Prostate gland (tissue), 2 donors: ENCODE measurements at regions of chr1 and their contacts with region 1.

Region 1: DNA sequence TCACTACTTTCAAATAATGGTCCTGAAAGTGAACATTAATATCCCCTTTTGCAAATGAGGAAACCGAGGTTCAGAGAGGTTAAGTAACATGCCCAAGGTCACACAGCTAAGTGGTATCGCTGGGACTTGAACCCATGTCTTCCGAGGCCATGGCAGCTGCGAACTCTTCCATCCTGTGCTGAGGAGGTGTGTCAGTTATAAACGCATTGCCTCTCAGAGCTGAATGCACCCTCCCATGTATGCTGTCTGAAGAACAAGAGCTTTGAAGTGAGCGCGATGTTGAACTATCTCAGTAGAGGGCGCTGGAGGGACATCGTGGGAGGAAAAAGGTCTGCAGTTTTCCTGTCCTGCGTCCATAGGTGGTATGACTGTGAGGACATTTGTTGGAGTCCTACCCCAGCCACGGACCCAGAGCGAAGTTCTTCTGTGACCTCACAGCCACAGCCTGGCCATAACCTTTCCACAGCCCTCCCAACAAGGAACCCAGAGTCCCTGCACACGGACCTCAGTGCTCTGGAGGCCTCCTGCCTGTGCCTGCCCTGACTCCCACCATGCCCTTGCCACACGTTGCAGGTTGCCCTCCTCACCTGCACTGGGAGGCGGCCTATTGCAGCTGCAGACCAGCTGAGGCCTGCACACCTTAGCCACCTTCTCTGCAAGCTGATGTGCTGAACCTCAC is 7.5 kb downstream of the MYOC start:
- DNase-seq: peak; percentile 84
- H3K4me3 ChIP-seq: no peak overlapping the region
- H3K27ac ChIP-seq: peak overlapping the region; percentile 78 to 80
- H3K4me1 ChIP-seq: peaks cover 13% of the 10 kb centered on the region
- H3K27me3 ChIP-seq: no peaks in the 10 kb centered on the region
- CTCF ChIP-seq: peak; percentile 53 to 85 (median 76)
- POLR2A ChIP-seq: no peak

Region 2: GRCh38 chr1:171758011-171758410 is 113.1 kb after region 1 on chr1:
- intact Hi-C with region 1: no loop called
- DNase-seq: no peak
- H3K4me3 ChIP-seq: no peak overlapping the region
- H3K27ac ChIP-seq: no peak overlapping the region
- H3K4me1 ChIP-seq: no peaks in the 10 kb centered on the region
- H3K27me3 ChIP-seq: no peaks in the 10 kb centered on the region
- CTCF ChIP-seq: no peak
- POLR2A ChIP-seq: no peak

Region 3: DNA sequence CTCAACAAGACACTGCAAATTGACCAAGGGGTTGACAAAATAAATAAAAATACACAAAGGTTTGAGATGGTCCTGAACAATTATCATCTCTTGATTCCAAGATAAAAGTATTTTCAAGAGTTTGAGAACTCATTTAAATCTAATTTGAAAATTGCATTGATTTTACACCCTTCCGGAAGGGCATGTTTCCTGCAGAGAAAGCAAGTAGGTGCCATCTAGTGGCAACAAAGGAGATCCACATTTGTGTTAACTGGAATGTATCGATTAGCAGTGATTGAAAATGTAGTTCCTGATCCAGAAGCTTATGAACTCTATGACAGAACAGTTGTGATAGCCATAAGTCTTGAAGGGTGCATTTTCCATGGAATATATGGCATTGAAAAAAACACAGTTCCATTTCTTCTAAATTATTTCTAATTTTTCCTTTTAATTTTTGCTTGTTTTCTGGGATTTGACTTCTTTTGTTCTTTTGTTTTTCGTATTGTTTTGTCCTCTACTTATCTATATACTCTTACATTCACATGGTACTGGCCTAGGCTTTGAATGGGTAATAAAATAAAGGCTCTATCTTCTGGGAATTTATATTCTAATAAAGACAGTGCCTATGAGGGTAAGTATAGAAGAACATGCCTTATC is 340.0 kb after region 1 on chr1:
- intact Hi-C with region 1: loop called (anchors 5 kb)
- DNase-seq: no peak
- H3K4me3 ChIP-seq: no peak overlapping the region
- H3K27ac ChIP-seq: no peak overlapping the region
- H3K4me1 ChIP-seq: no peaks in the 10 kb centered on the region
- H3K27me3 ChIP-seq: no peaks in the 10 kb centered on the region
- CTCF ChIP-seq: peak; percentile 44 to 74 (median 66)
- POLR2A ChIP-seq: no peak